Gastrocnemius medialis (tissue), 4 donors: ENCODE measurements at regions of chr13 and their contacts with region 1.

Region 1: GRCh38 chr13:50123862-50124536 is 108.8 kb downstream of the KCNRG start:
- DNase-seq: peak; percentile 90 to 99
- ATAC-seq: peak; percentile 68 to 70
- H3K4me3 ChIP-seq: peak overlapping the region; percentile 84 to 99 (median 90)
- H3K27ac ChIP-seq: peak overlapping the region; percentile 98 to 100 (median 99)
- H3K4me1 ChIP-seq: peaks cover 48 to 49% of the 10 kb centered on the region in 2 donors
- H3K27me3 ChIP-seq: no peaks in the 10 kb centered on the region
- CTCF ChIP-seq: peak in 1 of 5 experiments; percentile 36
- POLR2A ChIP-seq: peak; percentile 97

Region 2: GRCh38 chr13:49936085-49936940 is 187.7 kb before region 1 on chr13 and contains the start of gene SPRYD7:
- in situ Hi-C with region 1: no loop called
- intact Hi-C with region 1: loop called (anchors 5 kb)
- DNase-seq: peak; percentile 96 to 98
- ATAC-seq: peak; percentile 92 to 93
- H3K4me3 ChIP-seq: peak within 1 kb of the TSS; percentile 80 to 98 (median 88)
- H3K27ac ChIP-seq: peak within 1 kb of the TSS; percentile 87 to 95 (median 92)
- H3K4me1 ChIP-seq: peaks cover 49 to 54% of the 10 kb centered on the region in 2 donors
- H3K27me3 ChIP-seq: no peaks in the 10 kb centered on the region
- CTCF ChIP-seq: peak; percentile 88 to 95 (median 93)
- POLR2A ChIP-seq: peak; percentile 77 to 83
- total RNA-seq, gene SPRYD7: 9.8 to 24.7 (median 17.9) TPM

Region 3: GRCh38 chr13:50081679-50082425 is 42.1 kb before region 1 on chr13:
- in situ Hi-C with region 1: loop called in 1 of 4 experiments (anchors 5 kb)
- intact Hi-C with region 1: loop called (anchors 1 kb)
- DNase-seq: peak; percentile 97 to 98
- ATAC-seq: peak; percentile 96
- H3K4me3 ChIP-seq: peak overlapping the region; percentile 68 to 88 (median 80)
- H3K27ac ChIP-seq: peak overlapping the region; percentile 85 to 90 (median 87)
- H3K4me1 ChIP-seq: peaks cover 57 to 65% of the 10 kb centered on the region in 2 donors
- H3K27me3 ChIP-seq: no peaks in the 10 kb centered on the region
- CTCF ChIP-seq: peak in 2 of 5 experiments; percentile 10 to 19
- POLR2A ChIP-seq: peak; percentile 25 to 63

Region 4: DNA sequence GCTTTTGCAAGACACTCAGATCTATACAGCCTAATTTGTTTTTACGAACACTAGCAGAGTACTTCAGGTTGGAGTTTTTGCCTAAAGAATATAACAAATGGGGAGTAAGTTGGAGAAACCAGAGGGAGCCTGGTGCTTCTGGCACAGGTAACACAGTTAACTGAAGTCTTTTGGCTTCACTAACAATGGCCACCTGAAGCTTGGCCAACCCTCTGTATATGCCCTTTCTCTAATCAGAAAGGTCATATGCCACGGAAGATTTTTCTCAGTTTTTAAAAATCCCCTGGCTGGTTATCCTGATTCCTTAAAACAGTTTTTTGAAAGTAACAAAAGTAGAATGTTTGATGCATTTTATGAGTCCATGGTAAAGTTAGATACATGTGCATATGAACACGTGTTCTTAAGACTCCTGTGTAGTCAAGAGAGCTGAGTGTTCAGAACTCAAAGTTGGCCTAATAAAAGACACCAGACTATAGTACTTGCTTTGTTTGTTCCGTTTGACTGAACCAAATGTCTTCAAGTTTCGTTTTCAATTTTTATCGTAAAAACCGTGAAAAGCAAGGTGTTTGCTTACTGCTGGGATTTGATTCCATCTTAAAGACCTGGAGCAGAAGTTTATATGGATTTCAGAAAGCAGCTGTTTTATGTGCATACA is 28.8 kb after region 1 on chr13:
- in situ Hi-C with region 1: no loop called
- intact Hi-C with region 1: no loop called
- DNase-seq: no peak
- ATAC-seq: peak in 1 of 2 donors; percentile 49
- H3K4me3 ChIP-seq: peak overlapping the region in 3 of 4 donors; percentile 1 to 46 (median 22)
- H3K27ac ChIP-seq: no peak overlapping the region
- H3K4me1 ChIP-seq: peaks cover 0 to 8% of the 10 kb centered on the region in 2 donors
- H3K27me3 ChIP-seq: no peaks in the 10 kb centered on the region
- CTCF ChIP-seq: no peak
- POLR2A ChIP-seq: no peak

Region 5: DNA sequence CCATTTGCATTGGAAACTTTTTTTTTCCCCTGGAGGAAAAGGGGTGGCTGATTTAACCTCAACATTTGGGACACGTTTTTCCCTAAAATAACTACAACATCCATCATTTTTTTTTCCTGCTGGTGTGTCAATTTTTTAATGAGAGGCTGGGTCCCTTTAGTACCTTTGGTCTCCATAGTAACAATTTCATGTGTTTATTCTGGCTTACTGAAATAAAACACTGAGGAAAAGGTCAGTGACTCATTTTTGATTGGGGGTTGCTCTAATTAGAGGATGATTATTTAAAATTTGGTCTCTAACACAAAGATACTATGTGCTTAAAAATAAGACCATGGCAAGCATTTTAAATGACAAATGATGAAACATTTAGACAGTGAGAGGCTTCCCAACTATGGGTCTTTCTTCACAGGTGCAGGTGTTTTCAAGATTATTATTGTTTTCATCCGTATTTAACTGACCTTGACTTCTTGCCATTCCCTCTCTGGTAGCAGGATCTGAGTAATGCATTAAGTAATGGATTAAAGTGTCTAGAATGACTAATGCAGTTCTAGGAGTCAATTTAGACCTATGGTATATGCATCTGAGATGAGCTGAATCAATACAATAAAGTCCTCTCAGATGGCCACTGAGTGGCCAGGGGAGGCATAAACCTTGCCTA is 297.6 kb after region 1 on chr13:
- in situ Hi-C with region 1: no loop called
- intact Hi-C with region 1: loop called (anchors 1 kb)
- DNase-seq: no peak
- ATAC-seq: no peak
- H3K4me3 ChIP-seq: no peak overlapping the region
- H3K27ac ChIP-seq: peak overlapping the region; percentile 74 to 89 (median 82)
- H3K4me1 ChIP-seq: peaks cover 57 to 64% of the 10 kb centered on the region in 2 donors
- H3K27me3 ChIP-seq: no peaks in the 10 kb centered on the region
- CTCF ChIP-seq: no peak
- POLR2A ChIP-seq: peak in 1 of 2 donors; percentile 1